T-cell (primary cell): ENCODE measurements at regions of chr18 and their contacts with region 1.

Region 1: DNA sequence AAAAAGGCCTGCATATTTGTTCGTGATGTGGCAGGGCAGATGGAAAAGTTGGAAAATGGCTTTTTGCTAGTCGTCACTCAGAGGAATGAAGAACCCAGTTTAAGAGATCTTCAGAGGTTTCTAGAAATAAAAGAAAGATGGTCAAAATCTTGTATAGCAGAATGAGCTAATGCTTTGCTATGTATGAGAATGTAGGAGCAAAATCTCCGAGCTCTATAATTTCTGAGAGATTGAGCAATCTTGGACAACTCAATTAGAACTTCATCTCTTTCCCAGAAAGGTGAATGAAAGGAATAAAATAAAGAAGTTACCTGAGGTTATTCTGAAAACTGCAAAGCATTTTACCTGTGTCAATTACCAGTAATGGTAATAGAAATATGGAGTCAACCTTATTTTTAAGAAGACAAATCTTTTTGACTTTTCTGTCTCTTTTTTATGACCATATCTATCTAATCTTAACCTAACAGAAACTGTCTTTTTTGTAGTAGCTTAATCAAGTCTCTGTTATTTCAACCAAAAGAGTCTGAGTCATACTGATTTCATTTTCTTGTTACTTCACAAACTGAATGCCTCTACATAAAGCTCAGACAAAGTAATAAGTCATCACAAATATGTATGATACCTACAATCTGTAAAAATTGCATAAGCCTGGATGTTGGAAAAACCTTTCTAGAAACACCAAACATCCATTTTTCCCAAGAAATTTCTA is 32.5 kb downstream of the CCDC68 start:
- DNase-seq: no peak
- ATAC-seq: no peak
- H3K4me3 ChIP-seq: no peak overlapping the region
- H3K4me3 Mint-ChIP-seq: no peak overlapping the region
- H3K27ac ChIP-seq: no peak overlapping the region
- H3K27ac Mint-ChIP-seq: no peak overlapping the region
- H3K4me1 ChIP-seq: no peaks in the 10 kb centered on the region
- H3K4me1 Mint-ChIP-seq: no peaks in the 10 kb centered on the region
- H3K27me3 ChIP-seq: no peaks in the 10 kb centered on the region
- H3K27me3 Mint-ChIP-seq: no peaks in the 10 kb centered on the region

Region 2: DNA sequence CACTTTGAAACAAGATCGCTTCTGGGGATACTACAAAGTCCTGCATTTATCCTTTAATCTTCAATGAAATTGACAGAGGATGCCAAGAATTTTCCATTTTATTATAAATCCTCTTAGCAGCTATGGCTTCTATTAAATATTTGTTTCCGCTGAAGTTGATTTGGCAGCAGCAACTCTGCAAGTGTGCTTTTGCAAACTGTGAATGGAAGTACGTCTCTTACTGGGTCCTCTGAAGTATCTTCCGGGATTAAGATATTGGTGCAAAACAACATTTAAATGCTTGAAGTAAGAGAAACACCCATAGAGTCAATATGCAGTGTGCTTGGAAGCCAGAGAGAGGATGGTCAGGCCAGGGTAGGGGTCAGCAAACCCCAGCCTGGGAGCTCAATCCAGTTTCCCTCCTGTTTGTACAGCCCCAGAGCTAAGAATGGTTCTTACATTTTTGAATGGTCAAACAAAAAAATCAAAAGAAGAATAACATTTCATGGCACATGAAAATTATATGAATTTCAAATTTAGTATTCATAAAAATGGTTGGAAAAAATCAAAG is 18.9 kb after region 1 on chr18:
- CTCF ChIA-PET with region 1: no interaction called
- POLR2A ChIA-PET with region 1: interaction called in 1 of 2 experiments, 16 read pairs
- DNase-seq: no peak
- ATAC-seq: no peak
- H3K4me3 ChIP-seq: peak overlapping the region in 1 of 2 donors; percentile 56
- H3K4me3 Mint-ChIP-seq: peak overlapping the region; percentile 81 to 82 (median 82)
- H3K27ac ChIP-seq: peak overlapping the region; percentile 70
- H3K27ac Mint-ChIP-seq: peak overlapping the region; percentile 78 to 99
- H3K4me1 ChIP-seq: peaks cover 3 to 7% of the 10 kb centered on the region in 2 experiments
- H3K4me1 Mint-ChIP-seq: peaks cover 19 to 25% (median 21%) of the 10 kb centered on the region in 3 donors
- H3K27me3 ChIP-seq: no peaks in the 10 kb centered on the region
- H3K27me3 Mint-ChIP-seq: peaks cover 2 to 4% of the 10 kb centered on the region in 2 donors

Region 3: GRCh38 chr18:56650944-56651770 is 1724.4 kb after region 1 on chr18 and contains the start of gene WDR7:
- CTCF ChIA-PET with region 1: no interaction called
- POLR2A ChIA-PET with region 1: no interaction called
- DNase-seq: peak; percentile 82 to 97 (median 94)
- ATAC-seq: peak; percentile 91 to 94 (median 92)
- H3K4me3 ChIP-seq: peak within 1 kb of the TSS; percentile 94
- H3K4me3 Mint-ChIP-seq: peak within 1 kb of the TSS; percentile 89 to 97 (median 95)
- H3K27ac ChIP-seq: peak within 1 kb of the TSS; percentile 86
- H3K27ac Mint-ChIP-seq: peak within 1 kb of the TSS; percentile 94 to 95
- H3K4me1 ChIP-seq: peaks cover 18 to 20% of the 10 kb centered on the region in 2 experiments
- H3K4me1 Mint-ChIP-seq: peaks cover 55 to 66% (median 65%) of the 10 kb centered on the region in 3 donors
- H3K27me3 ChIP-seq: no peaks in the 10 kb centered on the region
- H3K27me3 Mint-ChIP-seq: no peaks in the 10 kb centered on the region
- total RNA-seq, gene WDR7: 35.9 to 65.6 (median 41.5) TPM